Pancreas (tissue), 10 donors: ENCODE measurements at regions of chr22 and their contacts with region 1.

Region 1: GRCh38 chr22:29394931-29395581 is 6.7 kb upstream of the AP1B1 start:
- DNase-seq: peak in 5 of 6 donors; percentile 57 to 78 (median 63)
- ATAC-seq: peak; percentile 87 to 96 (median 94)
- H3K4me3 ChIP-seq: no peak overlapping the region
- H3K27ac ChIP-seq: no peak overlapping the region
- H3K4me1 ChIP-seq: peaks cover 0 to 6% (median 4%) of the 10 kb centered on the region in 3 donors
- H3K27me3 ChIP-seq: no peaks in the 10 kb centered on the region
- CTCF ChIP-seq: peak; percentile 37 to 66 (median 64)

Region 2: DNA sequence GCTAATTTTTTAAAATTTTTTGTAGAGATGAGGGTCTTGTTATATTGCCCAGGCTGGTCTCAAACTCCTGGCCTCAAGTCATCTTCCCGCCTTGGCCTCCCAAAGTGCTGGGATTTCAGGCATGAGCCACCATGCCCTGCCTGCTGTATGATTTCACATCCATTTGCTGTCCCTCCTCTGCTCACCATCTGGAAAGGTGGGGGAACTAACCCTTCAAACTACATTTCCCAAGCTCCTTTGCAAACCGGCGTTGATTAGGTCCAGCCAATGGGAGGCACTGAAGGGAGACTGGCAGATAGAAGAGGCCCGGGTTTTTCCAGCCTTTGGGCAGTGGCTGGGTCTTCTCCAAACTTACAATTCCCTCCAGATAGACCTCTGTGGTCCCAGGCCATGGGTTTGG is 62.7 kb after region 1 on chr22:
- intact Hi-C with region 1: no loop called
- DNase-seq: peak in 1 of 6 donors; percentile 27
- ATAC-seq: peak; percentile 40 to 76 (median 66)
- H3K4me3 ChIP-seq: no peak overlapping the region
- H3K27ac ChIP-seq: no peak overlapping the region
- H3K4me1 ChIP-seq: no peaks in the 10 kb centered on the region
- H3K27me3 ChIP-seq: no peaks in the 10 kb centered on the region
- CTCF ChIP-seq: no peak

Region 3: DNA sequence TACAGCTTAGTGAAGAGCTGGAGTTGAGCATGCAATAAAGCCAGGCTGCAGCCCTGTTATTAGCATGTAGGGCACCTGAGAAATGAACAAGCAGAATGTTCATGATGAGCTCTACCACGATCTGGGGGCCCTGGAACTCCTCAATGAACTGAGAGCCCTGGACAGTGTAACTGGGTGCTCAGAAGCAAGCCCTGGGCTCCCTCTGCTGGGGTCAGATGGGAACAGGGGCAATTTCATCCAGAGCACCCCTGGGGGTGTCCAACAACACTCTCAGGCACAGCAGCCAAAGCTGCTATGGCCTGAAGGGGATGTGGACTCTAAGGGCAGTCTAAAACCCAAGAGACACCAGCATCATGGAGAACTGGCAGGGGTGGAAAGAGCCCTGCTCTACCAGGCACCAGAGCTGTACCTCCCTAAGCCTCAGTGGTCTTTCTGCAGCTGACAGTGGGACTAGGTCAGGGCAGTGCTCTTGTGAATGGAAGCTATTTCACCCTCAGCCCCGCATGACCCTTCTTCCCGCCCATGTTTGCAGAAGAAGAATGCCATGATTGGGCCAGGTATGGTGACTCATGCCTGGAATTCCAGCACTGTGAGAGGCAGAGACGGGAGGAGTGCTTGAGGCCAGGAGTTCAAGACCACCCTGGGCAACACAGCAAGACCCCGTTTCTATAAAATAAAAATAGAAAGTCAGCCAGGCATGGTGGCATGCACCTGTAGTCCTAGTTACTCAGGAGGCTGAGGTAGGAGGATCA is 129.6 kb after region 1 on chr22:
- intact Hi-C with region 1: loop called in 1 of 3 experiments (anchors 10 kb)
- DNase-seq: peak in 1 of 6 donors; percentile 33
- ATAC-seq: peak in 3 of 4 donors; percentile 69 to 74 (median 72)
- H3K4me3 ChIP-seq: no peak overlapping the region
- H3K27ac ChIP-seq: no peak overlapping the region
- H3K4me1 ChIP-seq: no peaks in the 10 kb centered on the region
- H3K27me3 ChIP-seq: no peaks in the 10 kb centered on the region
- CTCF ChIP-seq: peak in 1 of 4 donors; percentile 11